Calu3 (cell line): ENCODE measurements at regions of chr10 and their contacts with region 1.

Region 1: DNA sequence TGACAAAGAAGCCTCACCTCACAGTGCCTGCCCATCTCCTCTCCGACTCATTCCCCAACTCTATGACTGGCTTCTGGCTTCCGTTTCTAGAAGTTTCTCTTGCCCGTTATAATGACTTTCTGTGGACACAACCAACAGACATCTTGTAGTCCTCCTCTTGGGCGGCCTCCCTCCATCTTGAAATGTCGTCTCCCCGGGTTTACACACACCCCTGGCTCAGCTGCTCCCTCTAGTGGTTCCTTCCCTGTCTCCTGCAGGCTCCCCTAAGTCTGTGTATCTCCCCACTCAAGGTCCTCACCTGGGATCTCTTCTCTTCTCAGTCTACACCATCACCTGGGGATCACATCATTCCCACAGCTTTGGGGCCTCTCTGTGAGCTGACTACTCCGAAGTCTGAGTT is 123.4 kb upstream of the NEBL start:
- DNase-seq: peak; percentile 30
- H3K4me3 Mint-ChIP-seq: no peak overlapping the region
- H3K27ac Mint-ChIP-seq: no peak overlapping the region
- H3K4me1 Mint-ChIP-seq: no peaks in the 10 kb centered on the region
- H3K27me3 Mint-ChIP-seq: no peaks in the 10 kb centered on the region
- CTCF ChIP-seq: peak; percentile 23

Region 2: DNA sequence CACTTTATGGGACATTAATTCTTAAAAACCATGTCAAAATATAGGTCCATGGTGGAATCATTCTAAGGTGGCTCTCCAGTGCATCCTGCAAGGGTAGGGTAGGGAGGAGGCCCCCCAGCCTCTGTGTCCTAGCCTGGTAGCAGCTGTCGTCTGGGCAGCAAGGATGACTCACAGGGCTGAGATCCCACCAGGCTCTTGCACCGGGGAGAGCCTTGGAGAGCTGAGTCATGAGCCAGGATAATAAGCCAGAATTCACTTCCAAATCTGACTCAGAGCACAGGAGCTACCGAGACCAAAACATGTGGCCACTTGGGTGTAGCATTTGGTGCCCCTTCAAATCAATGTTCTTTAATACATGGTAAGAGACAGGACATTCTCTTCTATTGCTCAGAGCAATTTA is 422.0 kb before region 1 on chr10:
- CTCF ChIA-PET with region 1: interaction called, 10 read pairs
- intact Hi-C with region 1: no loop called
- DNase-seq: no peak
- H3K4me3 Mint-ChIP-seq: no peak overlapping the region
- H3K27ac Mint-ChIP-seq: no peak overlapping the region
- H3K4me1 Mint-ChIP-seq: no peaks in the 10 kb centered on the region
- H3K27me3 Mint-ChIP-seq: no peaks in the 10 kb centered on the region
- CTCF ChIP-seq: no peak

Region 3: DNA sequence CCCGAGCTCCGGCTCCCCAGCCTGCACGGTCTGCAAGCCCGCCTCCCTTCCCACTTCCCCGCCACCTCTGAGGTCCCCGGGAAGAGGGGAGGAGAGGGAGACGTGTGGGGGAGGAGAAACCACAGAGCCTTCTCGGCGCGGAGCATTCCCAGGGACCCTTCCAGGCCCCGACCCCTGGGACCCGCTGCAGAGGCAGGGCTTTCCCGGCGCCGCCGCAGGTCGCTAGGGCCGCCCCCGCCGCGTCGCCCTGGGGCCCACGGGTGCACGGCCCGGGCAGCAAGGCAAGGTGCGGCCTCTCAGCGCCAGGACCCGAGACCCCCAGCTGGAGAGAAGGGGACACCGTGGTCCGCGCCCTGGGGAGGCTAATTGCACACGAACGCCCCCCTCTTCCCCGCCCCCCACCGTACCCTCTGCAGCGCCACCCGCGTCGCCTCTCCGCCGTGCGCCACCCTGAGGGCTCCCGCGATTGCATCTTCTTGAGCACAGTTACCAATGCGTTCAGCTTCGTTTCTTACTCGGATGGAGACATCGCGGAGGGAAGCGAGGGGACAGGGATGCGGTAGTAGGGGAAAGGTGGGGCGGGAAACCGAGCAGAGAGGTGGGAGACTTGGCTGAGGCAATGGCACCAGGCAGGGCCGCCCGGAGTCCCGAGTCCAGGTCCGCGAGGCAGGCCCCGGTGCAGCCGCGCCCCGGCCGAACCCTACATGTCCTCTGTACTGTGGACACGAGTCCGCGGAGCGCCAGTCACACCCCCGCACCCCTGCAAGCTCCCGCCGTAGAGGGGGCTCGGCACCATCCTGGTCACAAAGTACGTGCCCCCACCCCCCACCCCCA is 476.0 kb after region 1 on chr10:
- CTCF ChIA-PET with region 1: no interaction called
- intact Hi-C with region 1: no loop called
- DNase-seq: peak; percentile 53
- H3K4me3 Mint-ChIP-seq: peak overlapping the region; percentile 78
- H3K27ac Mint-ChIP-seq: no peak overlapping the region
- H3K4me1 Mint-ChIP-seq: no peaks in the 10 kb centered on the region
- H3K27me3 Mint-ChIP-seq: peaks cover 28% of the 10 kb centered on the region
- CTCF ChIP-seq: no peak